Activated naive CD4-positive, alpha-beta T cell treated with anti-CD3 and anti-CD28 coated beads, Interleukin-2, amount 10 ng/mL, durations not matched to agents 7 days and 5 days (primary cell): ENCODE measurements at regions of chr4 and their contacts with region 1.

Region 1: GRCh38 chr4:77629885-77630284 is 24.3 kb downstream of the CXCL13 start:
- DNase-seq: no peak
- H3K4me3 Mint-ChIP-seq: no peak overlapping the region
- H3K27ac Mint-ChIP-seq: no peak overlapping the region
- H3K4me1 Mint-ChIP-seq: peaks cover 13% of the 10 kb centered on the region
- H3K27me3 Mint-ChIP-seq: no peaks in the 10 kb centered on the region

Region 2: DNA sequence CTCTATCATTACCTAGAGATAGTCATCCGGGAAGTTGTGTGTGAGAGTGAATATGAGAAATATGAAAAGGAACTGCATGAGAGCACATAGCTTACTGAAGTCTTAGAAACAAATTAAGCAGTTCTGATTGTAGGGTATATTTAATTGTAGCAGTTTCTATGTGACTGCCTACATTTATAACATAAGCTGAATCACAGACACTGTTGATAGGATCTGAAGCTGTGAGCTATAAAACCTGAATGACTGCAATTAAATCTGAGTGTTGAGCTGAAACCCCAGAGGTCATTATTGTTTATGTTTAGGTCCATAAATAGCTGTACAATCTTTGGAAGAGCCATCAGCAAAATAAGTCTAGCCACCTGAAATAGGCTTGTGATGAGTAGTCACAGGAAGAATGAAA is 234.4 kb before region 1 on chr4:
- CTCF ChIA-PET with region 1: no interaction called
- DNase-seq: no peak
- H3K4me3 Mint-ChIP-seq: no peak overlapping the region
- H3K27ac Mint-ChIP-seq: no peak overlapping the region
- H3K4me1 Mint-ChIP-seq: no peaks in the 10 kb centered on the region
- H3K27me3 Mint-ChIP-seq: peaks cover 6% of the 10 kb centered on the region

Region 3: GRCh38 chr4:77564231-77564630 is 65.7 kb before region 1 on chr4:
- CTCF ChIA-PET with region 1: no interaction called
- DNase-seq: no peak
- H3K4me3 Mint-ChIP-seq: no peak overlapping the region
- H3K27ac Mint-ChIP-seq: no peak overlapping the region
- H3K4me1 Mint-ChIP-seq: no peaks in the 10 kb centered on the region
- H3K27me3 Mint-ChIP-seq: peaks cover 3% of the 10 kb centered on the region

Region 4: DNA sequence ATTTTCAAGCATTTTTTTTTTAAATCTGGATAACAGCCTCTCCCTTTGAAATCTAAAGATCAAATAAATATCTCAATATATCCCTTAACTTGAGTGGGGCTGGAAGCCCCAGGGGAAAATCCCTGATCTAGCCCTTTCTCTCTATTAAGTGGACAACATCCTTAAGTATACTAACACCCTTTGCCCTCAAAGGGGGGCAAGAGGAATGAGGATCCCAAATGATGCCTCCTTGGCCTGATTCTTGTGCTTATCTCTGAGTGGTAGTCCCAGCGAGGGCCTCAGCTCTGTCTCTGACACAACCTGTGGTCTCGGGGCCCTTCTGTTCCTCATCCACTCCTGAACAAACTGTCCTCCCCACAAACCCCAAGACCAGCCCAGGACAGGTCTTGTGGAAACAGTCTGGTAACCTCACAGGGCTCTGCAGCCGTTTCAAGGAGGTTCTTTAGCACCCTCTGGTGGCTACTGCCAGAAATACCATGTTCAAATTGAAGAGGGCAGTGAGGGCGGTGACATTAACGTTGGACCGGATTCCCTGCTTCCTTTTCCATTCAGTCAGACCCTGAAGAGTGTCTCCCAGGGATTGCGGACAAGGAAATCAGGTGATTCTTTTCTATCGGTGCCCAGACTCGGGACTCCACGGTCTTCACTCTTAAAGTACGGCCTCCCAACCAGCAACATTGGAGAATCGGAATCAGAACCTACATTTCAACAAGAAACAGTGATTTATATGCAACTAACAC is 11.3 kb before region 1 on chr4:
- CTCF ChIA-PET with region 1: interaction called, 29 read pairs
- DNase-seq: peak; percentile 67
- H3K4me3 Mint-ChIP-seq: no peak overlapping the region
- H3K27ac Mint-ChIP-seq: no peak overlapping the region
- H3K4me1 Mint-ChIP-seq: peaks cover 2% of the 10 kb centered on the region
- H3K27me3 Mint-ChIP-seq: peaks cover 6% of the 10 kb centered on the region